RWPE1 (cell line): ENCODE measurements at regions of chr4 and their contacts with region 1.

Region 1: DNA sequence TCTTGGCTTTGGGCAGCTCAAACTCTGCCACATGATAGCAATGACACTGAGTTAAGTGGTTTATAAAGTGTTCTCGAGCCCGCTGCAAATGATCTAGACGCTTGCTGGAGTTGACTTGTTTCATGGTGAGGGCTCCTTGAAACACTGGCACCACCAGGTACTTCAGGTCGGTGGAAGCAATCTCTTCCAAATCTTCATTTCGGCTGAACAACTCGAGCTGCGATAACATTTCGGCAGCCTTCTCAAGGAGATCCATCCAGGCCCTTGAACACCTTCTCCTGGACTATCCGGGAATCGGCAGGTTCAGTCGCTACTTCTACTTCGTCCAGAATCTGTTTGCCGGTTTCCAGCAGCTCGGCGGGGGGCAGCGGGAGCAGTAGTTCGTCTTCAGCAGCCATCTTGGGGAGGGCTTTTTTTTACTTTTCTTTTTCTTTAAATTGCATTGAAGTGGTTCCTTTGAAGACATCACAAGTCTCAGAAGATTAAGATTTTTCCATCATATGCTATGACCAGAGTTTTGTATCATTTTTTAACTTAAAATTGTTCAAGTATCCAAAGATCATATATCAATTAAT is 28.0 kb downstream of the HNRNPDL start:
- DNase-seq: no peak
- H3K27ac ChIP-seq: no peak overlapping the region
- CTCF ChIP-seq: no peak

Region 2: DNA sequence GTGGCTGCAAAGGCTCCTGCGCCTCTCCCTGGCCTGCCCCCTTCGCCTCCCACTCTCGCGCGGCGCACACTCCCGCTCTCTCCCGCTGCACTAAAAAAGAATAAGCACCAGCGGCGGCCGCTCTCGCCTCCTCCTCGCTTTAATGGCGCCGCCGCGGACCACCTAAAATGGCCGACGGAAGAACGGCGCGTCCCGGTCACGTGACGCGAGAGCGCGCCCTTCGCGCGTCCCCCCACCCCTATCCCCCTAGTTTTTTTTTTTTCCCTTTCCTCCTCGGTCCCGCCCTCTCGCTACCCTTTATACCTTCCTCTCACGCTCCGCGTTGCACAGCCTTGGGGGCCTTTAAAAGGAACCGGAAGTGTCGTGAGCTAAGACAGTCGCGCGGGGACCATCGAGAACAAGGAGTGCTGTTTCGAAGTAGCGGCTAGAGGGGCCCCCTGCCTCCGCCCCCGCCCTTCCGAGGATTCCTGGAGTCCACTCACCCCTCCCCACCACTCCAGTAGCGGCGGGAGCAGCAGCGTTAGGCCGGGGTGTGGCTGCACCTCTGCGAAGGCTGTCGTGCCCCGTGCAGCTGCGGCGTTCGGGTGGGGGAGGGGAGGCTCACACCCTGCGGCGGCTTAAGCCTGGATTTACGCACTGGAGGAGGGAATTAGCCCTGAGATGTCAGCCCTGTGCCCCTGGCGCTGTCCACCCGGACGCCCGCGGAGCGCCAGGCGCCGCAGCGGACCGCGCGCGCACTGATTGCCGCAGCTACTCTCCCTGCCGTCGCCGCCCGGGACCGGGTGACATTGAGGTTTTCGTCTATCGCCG is 28.3 kb before region 1 on chr4 and contains the start of gene HNRNPD:
- CTCF ChIA-PET with region 1: no interaction called
- POLR2A ChIA-PET with region 1: interaction called, 10 read pairs
- DNase-seq: peak; percentile 95
- H3K27ac ChIP-seq: peak within 1 kb of the TSS; percentile 98
- CTCF ChIP-seq: no peak